Activated B cell treated with CpG ODN at 0.5 μM for 24 hours (primary cell): ENCODE measurements at regions of chr16 and their contacts with region 1.

Region 1: GRCh38 chr16:56317998-56318826 is 107.1 kb downstream of the AMFR start:
- DNase-seq: peak; percentile 66
- ATAC-seq: peak; percentile 99
- H3K4me3 Mint-ChIP-seq: peak overlapping the region; percentile 52
- H3K27ac Mint-ChIP-seq: no peak overlapping the region
- H3K4me1 Mint-ChIP-seq: peaks cover 15% of the 10 kb centered on the region
- H3K27me3 Mint-ChIP-seq: peaks cover 4% of the 10 kb centered on the region
- CTCF ChIP-seq: peak; percentile 39

Region 2: GRCh38 chr16:55842369-55843104 is 475.7 kb before region 1 on chr16:
- CTCF ChIA-PET with region 1: interaction called, 3 read pairs
- POLR2A ChIA-PET with region 1: no interaction called
- intact Hi-C with region 1: loop called (anchors 1 kb)
- DNase-seq: no peak
- ATAC-seq: no peak
- H3K4me3 Mint-ChIP-seq: no peak overlapping the region
- H3K27ac Mint-ChIP-seq: no peak overlapping the region
- H3K4me1 Mint-ChIP-seq: no peaks in the 10 kb centered on the region
- H3K27me3 Mint-ChIP-seq: peaks cover 18% of the 10 kb centered on the region
- CTCF ChIP-seq: no peak

Region 3: GRCh38 chr16:55949518-55949917 is 368.7 kb before region 1 on chr16:
- CTCF ChIA-PET with region 1: interaction called, 62 read pairs
- POLR2A ChIA-PET with region 1: no interaction called
- intact Hi-C with region 1: loop called (anchors 1 kb)
- DNase-seq: no peak
- ATAC-seq: no peak
- H3K4me3 Mint-ChIP-seq: no peak overlapping the region
- H3K27ac Mint-ChIP-seq: no peak overlapping the region
- H3K4me1 Mint-ChIP-seq: no peaks in the 10 kb centered on the region
- H3K27me3 Mint-ChIP-seq: peaks cover 19% of the 10 kb centered on the region
- CTCF ChIP-seq: no peak

Region 4: DNA sequence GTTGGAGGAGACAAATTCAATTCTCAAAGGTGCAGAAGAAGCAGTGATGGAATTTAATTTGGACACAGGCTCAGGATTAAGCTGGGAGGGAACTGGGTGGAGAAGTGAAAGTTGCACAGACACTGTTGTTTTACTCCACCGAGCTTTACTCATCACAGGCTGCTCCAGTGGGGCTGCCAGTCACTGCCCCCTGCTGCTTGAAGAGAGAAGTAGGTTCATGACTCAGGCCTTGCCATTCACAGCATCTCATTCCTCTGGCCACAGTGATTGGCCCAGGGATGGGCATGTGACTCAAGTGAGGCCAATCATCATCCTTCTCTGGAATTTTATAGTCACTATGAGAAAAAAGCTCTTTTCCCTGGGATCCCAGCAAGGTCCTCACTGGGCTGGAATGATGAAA is 115.2 kb before region 1 on chr16:
- CTCF ChIA-PET with region 1: interaction called, 6 read pairs
- POLR2A ChIA-PET with region 1: no interaction called
- intact Hi-C with region 1: loop called (anchors 1 kb)
- DNase-seq: no peak
- ATAC-seq: peak; percentile 92
- H3K4me3 Mint-ChIP-seq: no peak overlapping the region
- H3K27ac Mint-ChIP-seq: no peak overlapping the region
- H3K4me1 Mint-ChIP-seq: peaks cover 25% of the 10 kb centered on the region
- H3K27me3 Mint-ChIP-seq: no peaks in the 10 kb centered on the region
- CTCF ChIP-seq: no peak

Region 5: DNA sequence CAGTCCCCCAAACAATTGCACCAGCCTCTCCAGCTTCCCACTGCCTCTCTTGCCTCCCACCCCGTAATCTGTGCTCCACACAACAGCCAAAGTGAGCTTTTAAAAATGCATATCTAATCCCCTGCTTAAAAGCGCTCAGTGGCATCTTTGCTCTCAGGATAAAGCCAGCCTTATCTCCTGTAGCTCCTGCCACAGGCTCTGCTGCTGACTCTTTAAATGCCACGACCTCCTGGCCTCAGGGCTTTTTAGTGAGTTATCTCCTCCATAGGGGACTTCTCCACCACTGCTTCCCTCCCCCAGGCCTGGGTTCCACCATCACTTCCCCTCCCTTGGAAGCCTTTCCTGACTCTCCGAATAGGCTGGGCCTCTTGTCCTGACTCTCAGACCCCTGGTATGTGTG is 28.4 kb before region 1 on chr16:
- CTCF ChIA-PET with region 1: no interaction called
- POLR2A ChIA-PET with region 1: no interaction called
- intact Hi-C with region 1: no loop called
- DNase-seq: no peak
- ATAC-seq: no peak
- H3K4me3 Mint-ChIP-seq: no peak overlapping the region
- H3K27ac Mint-ChIP-seq: no peak overlapping the region
- H3K4me1 Mint-ChIP-seq: no peaks in the 10 kb centered on the region
- H3K27me3 Mint-ChIP-seq: no peaks in the 10 kb centered on the region
- CTCF ChIP-seq: no peak

Region 6: GRCh38 chr16:56450986-56451752 is 133.0 kb after region 1 on chr16 and contains the starts of genes NUDT21 and OGFOD1:
- CTCF ChIA-PET with region 1: no interaction called
- POLR2A ChIA-PET with region 1: no interaction called
- intact Hi-C with region 1: no loop called
- DNase-seq: peak; percentile 73
- ATAC-seq: peak; percentile 99
- H3K4me3 Mint-ChIP-seq: peak within 1 kb of the TSS; percentile 99
- H3K27ac Mint-ChIP-seq: peak within 1 kb of the TSS; percentile 97
- H3K4me1 Mint-ChIP-seq: peaks cover 41% of the 10 kb centered on the region
- H3K27me3 Mint-ChIP-seq: no peaks in the 10 kb centered on the region
- CTCF ChIP-seq: no peak
- total RNA-seq, gene NUDT21: 108 and 111 TPM in 2 replicates
- total RNA-seq, gene OGFOD1: 45.6 and 51.8 TPM in 2 replicates